ENCODE measurements at regions of chr4 and their contacts with region 1.

Region 1: GRCh38 chr4:54813674-54814073 is 155.9 kb downstream of the KIT start:
- DNase-seq: no peak
- H3K4me3 ChIP-seq: no peak overlapping the region
- H3K27ac ChIP-seq: no peak overlapping the region
- H3K4me1 ChIP-seq: no peaks in the 10 kb centered on the region
- H3K27me3 ChIP-seq: no peaks in the 10 kb centered on the region
- CTCF ChIP-seq: no peak
- EP300 ChIP-seq: no peak
- POLR2A ChIP-seq: no peak

Region 2: GRCh38 chr4:54731552-54731951 is 82.1 kb before region 1 on chr4:
- intact Hi-C with region 1: loop called in 1 of 4 experiments (anchors 2 kb)
- DNase-seq: no peak
- H3K4me3 ChIP-seq: no peak overlapping the region
- H3K27ac ChIP-seq: no peak overlapping the region
- H3K4me1 ChIP-seq: no peaks in the 10 kb centered on the region
- H3K27me3 ChIP-seq: no peaks in the 10 kb centered on the region
- CTCF ChIP-seq: no peak
- EP300 ChIP-seq: no peak
- POLR2A ChIP-seq: no peak

Region 3: GRCh38 chr4:54937501-54937900 is 123.8 kb after region 1 on chr4:
- intact Hi-C with region 1: no loop called
- DNase-seq: no peak
- H3K4me3 ChIP-seq: no peak overlapping the region
- H3K27ac ChIP-seq: no peak overlapping the region
- H3K4me1 ChIP-seq: no peaks in the 10 kb centered on the region
- H3K27me3 ChIP-seq: no peaks in the 10 kb centered on the region
- CTCF ChIP-seq: no peak
- EP300 ChIP-seq: no peak
- POLR2A ChIP-seq: no peak